Activated T-helper 2 cell treated with anti-CD3 and anti-CD28 coated beads, Interferon-gamma antibody, Interleukin-2, Interleukin-4, amounts not matched to agents 10 μg/mL and 5 μg/mL and 100 μg/mL, durations not matched to agents 14 hours and 24 hours and 36 hours (primary cell): ENCODE measurements at regions of chr9 and their contacts with region 1.

Region 1: GRCh38 chr9:87798261-87798833 is 72.4 kb downstream of the CTSL start:
- DNase-seq: no peak
- H3K4me3 Mint-ChIP-seq: no peak overlapping the region
- H3K27ac Mint-ChIP-seq: no peak overlapping the region
- H3K4me1 Mint-ChIP-seq: peaks cover 42% of the 10 kb centered on the region
- H3K27me3 Mint-ChIP-seq: no peaks in the 10 kb centered on the region

Region 2: GRCh38 chr9:87725900-87726709 is 72.2 kb before region 1 on chr9 and contains the start of gene CTSL:
- intact Hi-C with region 1: loop called (anchors 5 kb)
- DNase-seq: peak; percentile 40
- H3K4me3 Mint-ChIP-seq: peak within 1 kb of the TSS; percentile 90
- H3K27ac Mint-ChIP-seq: peak within 1 kb of the TSS; percentile 75
- H3K4me1 Mint-ChIP-seq: peaks cover 13% of the 10 kb centered on the region
- H3K27me3 Mint-ChIP-seq: peaks cover 35% of the 10 kb centered on the region
- total RNA-seq, gene CTSL: 13.4 and 14.1 TPM in 2 replicates